Activated naive CD4-positive, alpha-beta T cell treated with anti-CD3 and anti-CD28 coated beads for 36 hours (primary cell): ENCODE measurements at regions of chr17 and their contacts with region 1.

Region 1: DNA sequence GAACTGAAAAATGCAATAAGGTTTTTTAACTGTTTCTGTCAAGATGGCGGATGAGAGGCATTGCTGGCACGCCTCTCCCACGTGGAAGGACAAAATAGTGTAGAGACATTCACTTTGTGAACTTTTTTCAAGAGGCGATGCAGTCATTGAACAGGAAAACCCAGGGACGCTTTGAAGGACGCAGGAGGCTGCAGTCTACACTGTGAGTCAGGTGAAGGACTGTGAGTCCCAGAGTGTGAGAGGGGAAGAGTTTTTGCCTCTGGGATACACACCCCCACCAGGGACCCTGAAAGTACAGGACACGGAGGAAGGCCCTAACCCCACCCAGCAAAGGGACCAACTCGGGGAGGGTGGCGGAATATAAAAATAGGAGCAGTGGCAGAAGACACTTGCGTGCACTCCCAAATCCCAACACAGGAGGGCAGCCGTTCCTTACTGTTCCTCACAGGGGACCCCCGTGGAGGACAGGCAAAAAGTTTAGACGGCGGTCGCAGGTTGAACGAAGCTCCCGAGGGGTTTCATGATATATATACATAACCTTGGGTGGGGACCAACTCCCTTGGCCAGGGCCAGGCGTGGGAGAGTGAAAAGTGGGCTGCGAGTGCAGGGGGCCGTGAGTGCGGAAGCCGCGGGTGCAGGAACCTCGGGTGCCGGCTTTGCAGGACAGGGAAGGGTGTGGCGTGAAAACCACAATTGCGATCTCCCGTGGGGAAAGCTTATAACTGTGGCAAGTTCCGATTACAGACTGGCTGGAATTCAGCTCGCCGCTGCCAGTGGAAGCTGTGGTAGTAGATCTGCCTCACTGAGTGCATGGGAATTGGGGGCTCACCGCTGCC is 82.0 kb upstream of the ALOX12 start:
- DNase-seq: peak; percentile 85
- H3K4me3 Mint-ChIP-seq: peak overlapping the region; percentile 70
- H3K27ac Mint-ChIP-seq: peak overlapping the region; percentile 16
- H3K4me1 Mint-ChIP-seq: peaks cover 16% of the 10 kb centered on the region
- H3K27me3 Mint-ChIP-seq: peaks cover 14% of the 10 kb centered on the region

Region 2: DNA sequence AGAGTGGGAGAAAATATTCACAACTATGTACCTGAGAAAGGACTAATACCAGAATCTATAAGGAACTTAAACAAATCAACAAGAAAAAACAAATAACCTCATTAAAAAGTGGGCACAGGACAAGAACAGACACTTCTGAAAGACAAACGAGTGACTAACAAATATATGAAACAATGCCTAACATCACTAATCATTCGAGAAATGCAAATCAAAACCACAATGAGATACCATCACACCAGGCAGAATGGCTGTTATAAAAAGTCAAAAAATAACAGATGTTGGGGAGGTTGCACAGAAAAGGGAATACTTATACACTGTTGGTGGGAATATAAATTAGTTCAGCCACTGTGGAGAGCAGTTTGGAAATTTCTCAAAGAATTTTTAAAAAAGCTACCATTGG is 927.2 kb before region 1 on chr17:
- CTCF ChIA-PET with region 1: no interaction called
- intact Hi-C with region 1: no loop called
- DNase-seq: no peak
- H3K4me3 Mint-ChIP-seq: no peak overlapping the region
- H3K27ac Mint-ChIP-seq: no peak overlapping the region
- H3K4me1 Mint-ChIP-seq: no peaks in the 10 kb centered on the region
- H3K27me3 Mint-ChIP-seq: peaks cover 14% of the 10 kb centered on the region

Region 3: GRCh38 chr17:6843241-6843880 is 70.5 kb before region 1 on chr17:
- CTCF ChIA-PET with region 1: interaction called, 15 read pairs
- intact Hi-C with region 1: loop called (anchors 5 kb)
- DNase-seq: no peak
- H3K4me3 Mint-ChIP-seq: no peak overlapping the region
- H3K27ac Mint-ChIP-seq: no peak overlapping the region
- H3K4me1 Mint-ChIP-seq: peaks cover 5% of the 10 kb centered on the region
- H3K27me3 Mint-ChIP-seq: peaks cover 21% of the 10 kb centered on the region

Region 4: DNA sequence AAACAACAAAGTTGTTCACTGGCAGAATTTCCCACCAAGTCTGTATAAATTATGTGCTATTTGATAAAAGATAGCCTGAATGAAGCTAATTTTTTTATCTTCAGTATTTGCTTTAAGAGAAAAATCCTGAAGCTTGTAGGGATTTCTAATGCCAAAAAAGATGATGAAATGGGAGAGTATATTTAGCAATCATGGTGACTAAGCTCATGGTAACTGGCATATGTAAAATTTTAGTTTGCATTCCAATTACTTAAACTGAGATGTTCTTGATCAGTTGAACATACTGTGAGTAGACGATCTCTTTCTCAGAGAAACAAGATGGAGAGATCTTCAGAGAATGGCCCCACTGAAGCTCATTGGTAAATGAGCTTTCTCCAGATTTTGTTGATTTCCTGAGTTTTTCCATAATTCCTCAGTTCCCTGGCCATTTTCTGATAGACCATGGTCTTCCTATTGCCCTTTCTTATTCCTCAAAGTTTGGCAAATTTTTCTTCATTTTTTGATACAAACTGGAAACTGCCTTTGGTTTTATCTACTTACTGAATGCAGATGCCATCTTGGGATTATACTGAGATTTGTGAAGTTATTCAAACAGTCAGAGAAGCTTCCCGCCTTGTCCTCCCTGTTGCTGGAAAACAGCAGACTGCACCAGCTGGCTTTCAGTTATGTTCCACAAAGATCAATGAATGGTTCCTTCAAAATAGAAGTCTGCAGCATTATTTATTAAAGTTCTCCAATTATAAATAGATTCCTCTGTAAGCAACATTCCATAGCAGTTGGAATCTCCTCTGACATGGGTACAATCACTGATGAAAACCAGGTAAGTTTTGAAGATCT is 13.7 kb after region 1 on chr17:
- CTCF ChIA-PET with region 1: interaction called, 26 read pairs
- intact Hi-C with region 1: no loop called
- DNase-seq: no peak
- H3K4me3 Mint-ChIP-seq: no peak overlapping the region
- H3K27ac Mint-ChIP-seq: no peak overlapping the region
- H3K4me1 Mint-ChIP-seq: peaks cover 23% of the 10 kb centered on the region
- H3K27me3 Mint-ChIP-seq: no peaks in the 10 kb centered on the region

Region 5: DNA sequence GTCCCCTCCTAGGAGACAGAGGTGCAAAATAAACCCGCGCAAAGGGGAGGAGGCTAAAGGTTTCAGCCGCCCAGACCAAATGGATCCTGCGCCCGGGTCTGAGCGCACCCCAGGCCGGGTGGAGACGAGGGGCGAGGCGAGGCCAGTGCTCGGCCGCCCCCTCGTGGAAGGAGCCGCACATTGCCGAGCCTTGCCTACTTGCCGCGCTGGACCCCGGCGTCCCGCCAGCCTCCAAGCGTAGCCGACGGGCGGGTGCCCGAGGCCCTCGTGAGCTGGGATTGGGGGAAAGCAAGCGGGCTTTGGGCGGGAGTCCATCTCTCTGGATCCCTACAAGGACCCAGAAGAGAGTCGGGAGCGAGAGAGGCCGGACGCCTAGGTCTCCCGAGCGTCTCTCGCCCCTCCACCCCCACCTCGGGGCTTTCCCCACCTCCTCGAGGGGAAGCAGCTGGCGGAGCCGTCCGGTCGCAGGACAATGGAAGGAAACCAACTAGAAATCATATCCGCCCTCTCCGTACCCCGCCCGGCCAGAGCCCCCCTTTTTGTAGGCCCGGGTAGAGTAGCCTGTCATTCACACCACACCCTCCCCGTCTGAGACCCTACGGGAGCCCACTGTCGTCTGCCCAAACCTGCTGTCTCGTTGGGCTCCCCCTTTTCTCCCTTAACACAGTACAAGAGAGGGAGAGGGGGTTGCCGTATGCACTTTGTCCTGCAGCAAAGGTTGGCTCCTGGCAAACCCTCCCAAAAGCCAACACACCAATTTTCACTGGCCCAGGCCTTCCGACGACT is 108.4 kb after region 1 on chr17:
- CTCF ChIA-PET with region 1: interaction called, 21 read pairs
- intact Hi-C with region 1: loop called (anchors 1 kb)
- DNase-seq: peak; percentile 80
- H3K4me3 Mint-ChIP-seq: peak overlapping the region; percentile 59
- H3K27ac Mint-ChIP-seq: peak overlapping the region; percentile 26
- H3K4me1 Mint-ChIP-seq: peaks cover 29% of the 10 kb centered on the region
- H3K27me3 Mint-ChIP-seq: peaks cover 4% of the 10 kb centered on the region

Region 6: DNA sequence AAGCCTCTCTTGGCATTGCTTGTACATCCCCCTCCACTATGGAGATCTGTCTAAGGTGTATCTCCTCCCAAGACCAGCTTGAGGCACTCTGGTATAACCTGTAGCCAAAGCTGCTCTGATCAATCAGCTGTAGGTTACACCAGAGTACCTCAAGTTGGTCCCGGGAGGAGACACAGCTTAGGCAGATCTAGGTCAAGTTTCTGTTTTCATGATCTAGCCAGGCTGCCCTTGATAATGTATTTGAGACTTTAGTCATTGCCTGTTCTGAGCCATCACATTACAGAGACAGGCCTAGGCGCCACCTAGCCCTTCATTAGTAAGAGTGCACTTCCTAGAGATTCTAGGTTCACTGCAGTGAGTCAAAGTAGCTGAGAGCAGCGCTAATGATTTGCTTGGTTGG is 233.9 kb after region 1 on chr17:
- CTCF ChIA-PET with region 1: no interaction called
- intact Hi-C with region 1: no loop called
- DNase-seq: peak; percentile 9
- H3K4me3 Mint-ChIP-seq: no peak overlapping the region
- H3K27ac Mint-ChIP-seq: no peak overlapping the region
- H3K4me1 Mint-ChIP-seq: no peaks in the 10 kb centered on the region
- H3K27me3 Mint-ChIP-seq: peaks cover 2% of the 10 kb centered on the region

Region 7: GRCh38 chr17:7177196-7177953 is 263.5 kb after region 1 on chr17:
- CTCF ChIA-PET with region 1: no interaction called
- intact Hi-C with region 1: loop called (anchors 5 kb)
- DNase-seq: peak; percentile 78
- H3K4me3 Mint-ChIP-seq: peak overlapping the region; percentile 61
- H3K27ac Mint-ChIP-seq: no peak overlapping the region
- H3K4me1 Mint-ChIP-seq: peaks cover 11% of the 10 kb centered on the region
- H3K27me3 Mint-ChIP-seq: peaks cover 6% of the 10 kb centered on the region